ENCODE measurements at regions of chr2 and their contacts with region 1.

Region 1: DNA sequence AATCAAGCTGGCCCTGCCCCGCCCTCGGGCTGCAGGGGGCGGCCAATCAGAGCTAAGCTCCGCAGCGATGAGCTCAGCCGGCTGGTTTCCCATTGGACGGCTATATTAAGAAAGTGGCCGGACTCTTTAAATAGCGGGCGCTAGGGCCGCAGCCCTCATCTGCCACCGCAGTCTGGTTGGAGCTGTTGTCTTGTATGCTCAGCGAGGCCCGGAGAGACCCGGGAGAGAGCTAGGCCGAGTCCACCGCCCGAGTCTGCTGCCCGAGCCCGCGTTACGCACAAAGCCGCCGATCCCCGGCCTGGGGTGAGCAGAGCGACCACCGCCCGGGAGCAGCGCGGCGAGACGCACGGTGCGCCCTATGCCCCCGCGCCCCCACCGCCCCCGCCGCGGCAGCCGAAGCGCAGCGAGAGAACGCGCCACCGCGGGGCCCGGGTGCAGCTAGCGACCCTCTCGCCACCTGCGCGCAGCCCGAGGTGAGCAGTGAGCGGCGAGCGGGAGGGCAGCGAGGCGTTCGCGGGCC is at the start of gene RHOB:
- H3K4me3 ChIP-seq: peak within 1 kb of the TSS; percentile 90
- H3K27ac ChIP-seq: peak within 1 kb of the TSS; percentile 95
- H3K4me1 ChIP-seq: peaks cover 9% of the 10 kb centered on the region
- CTCF ChIP-seq: no peak

Region 2: GRCh38 chr2:20391951-20392699 is 54.9 kb before region 1 on chr2:
- CTCF ChIA-PET with region 1: interaction called, 9 read pairs
- POLR2A ChIA-PET with region 1: interaction called, 10 read pairs
- H3K4me3 ChIP-seq: no peak overlapping the region
- H3K27ac ChIP-seq: no peak overlapping the region
- H3K4me1 ChIP-seq: no peaks in the 10 kb centered on the region
- CTCF ChIP-seq: no peak

Region 3: DNA sequence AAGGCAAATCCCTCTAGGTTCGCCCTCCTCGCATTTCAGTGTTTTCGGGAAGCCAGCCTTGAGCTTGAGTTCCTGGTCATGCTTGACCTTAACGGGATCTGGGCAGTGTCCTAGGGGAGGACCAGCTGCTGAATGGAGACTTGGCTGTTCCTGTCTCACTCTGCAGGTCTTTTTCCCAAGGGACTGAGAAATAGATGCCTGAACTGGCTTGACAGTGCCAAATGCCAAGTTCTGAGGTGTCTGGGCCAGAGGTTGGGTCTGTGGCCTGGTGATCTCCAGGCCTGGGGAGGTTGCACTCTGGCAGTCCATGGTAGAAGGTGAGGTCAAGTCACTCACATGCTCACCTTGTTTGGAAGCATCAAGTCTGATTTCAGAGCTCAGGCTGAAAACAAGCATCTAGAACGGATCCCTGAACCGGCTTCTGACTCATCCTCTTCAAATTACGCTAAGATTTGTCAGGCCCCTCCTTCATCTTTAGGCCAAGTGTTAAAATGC is 19.5 kb after region 1 on chr2:
- CTCF ChIA-PET with region 1: interaction called, 3 read pairs
- POLR2A ChIA-PET with region 1: interaction called, 39 read pairs
- H3K4me3 ChIP-seq: no peak overlapping the region
- H3K27ac ChIP-seq: no peak overlapping the region
- H3K4me1 ChIP-seq: no peaks in the 10 kb centered on the region; the same call in 1 of the 2 replicates
- CTCF ChIP-seq: no peak

Region 4: DNA sequence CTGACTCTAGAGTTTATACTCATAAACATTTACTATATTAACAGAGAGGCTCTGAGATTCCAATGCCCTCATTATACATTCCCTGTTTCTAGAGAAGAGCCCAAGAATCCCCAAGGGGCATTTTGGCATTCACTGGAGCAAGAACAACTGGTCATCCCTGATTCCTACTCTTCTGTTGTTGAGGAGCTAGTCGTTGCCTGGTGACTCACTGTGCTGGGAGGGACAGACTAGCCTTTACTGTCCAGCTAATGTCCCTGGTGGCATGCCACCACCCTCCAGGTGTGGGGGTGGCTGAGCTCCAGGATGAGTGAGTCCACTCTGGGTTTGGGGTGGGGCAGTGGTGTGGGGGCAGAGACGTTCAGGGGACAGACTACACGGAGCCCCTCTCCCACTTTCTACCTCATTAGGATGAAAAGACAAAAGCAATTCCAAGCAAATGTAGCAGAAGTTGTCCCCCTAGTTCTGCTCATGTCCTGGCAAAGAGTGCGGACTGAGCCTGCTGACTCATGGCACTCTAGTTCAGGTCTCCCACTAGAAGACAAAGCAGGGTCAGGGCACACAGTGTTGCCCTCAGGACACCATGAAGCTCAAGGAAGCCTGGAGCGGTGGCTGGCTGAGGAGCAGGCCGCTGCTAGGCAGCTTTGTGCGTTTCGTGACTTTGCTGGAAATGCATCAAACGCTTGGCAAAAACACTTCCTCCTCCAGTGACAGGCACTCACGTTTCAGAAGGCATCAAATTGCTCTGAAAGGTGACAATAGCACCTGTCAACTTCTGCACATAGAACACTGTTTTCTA is 49.3 kb after region 1 on chr2:
- CTCF ChIA-PET with region 1: no interaction called
- POLR2A ChIA-PET with region 1: interaction called, 50 read pairs
- H3K4me3 ChIP-seq: no peak overlapping the region
- H3K27ac ChIP-seq: no peak overlapping the region
- H3K4me1 ChIP-seq: no peaks in the 10 kb centered on the region
- CTCF ChIP-seq: no peak

Region 5: GRCh38 chr2:20542746-20543468 is 95.9 kb after region 1 on chr2:
- CTCF ChIA-PET with region 1: interaction called, 3 read pairs
- POLR2A ChIA-PET with region 1: interaction called, 15 read pairs
- H3K4me3 ChIP-seq: no peak overlapping the region
- H3K27ac ChIP-seq: no peak overlapping the region
- H3K4me1 ChIP-seq: no peaks in the 10 kb centered on the region
- CTCF ChIP-seq: no peak

Region 6: DNA sequence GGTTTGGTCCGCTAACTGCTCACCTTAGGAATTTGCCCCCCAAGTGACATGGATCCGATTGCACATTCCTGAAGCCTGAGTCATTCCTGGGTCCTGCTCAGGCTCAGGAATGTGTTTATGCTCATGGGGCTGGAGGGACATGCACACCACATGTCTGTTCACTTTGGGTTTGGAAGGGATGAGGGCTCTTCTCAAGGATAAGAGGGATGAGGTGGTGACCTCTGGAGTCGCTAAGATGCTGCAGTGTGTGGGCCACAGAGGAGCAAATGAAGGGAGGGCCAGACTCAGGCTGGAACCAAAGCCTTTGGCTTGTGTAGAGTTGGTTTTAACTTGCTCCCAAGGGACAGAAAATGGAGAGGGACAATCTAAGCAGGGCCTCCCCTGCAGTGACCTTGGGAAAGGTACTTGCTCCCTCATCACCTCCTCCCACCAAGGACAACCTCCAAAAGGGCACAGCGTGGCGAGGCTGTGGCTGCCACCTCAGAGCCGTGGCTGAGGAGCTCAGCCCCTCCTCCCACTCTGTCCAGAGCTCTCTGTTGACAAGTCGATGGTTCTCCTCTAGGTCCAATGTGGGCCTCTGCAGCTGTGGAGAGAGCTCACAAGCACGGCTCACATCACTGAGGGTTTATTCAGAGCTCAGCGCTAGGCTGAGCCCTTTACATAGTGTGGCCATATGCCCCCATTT is 137.8 kb after region 1 on chr2:
- CTCF ChIA-PET with region 1: interaction called, 5 read pairs
- POLR2A ChIA-PET with region 1: interaction called, 100 read pairs
- H3K4me3 ChIP-seq: no peak overlapping the region
- H3K27ac ChIP-seq: no peak overlapping the region
- H3K4me1 ChIP-seq: peaks cover 8% of the 10 kb centered on the region; the same call in 1 of the 2 replicates
- CTCF ChIP-seq: no peak

Region 7: DNA sequence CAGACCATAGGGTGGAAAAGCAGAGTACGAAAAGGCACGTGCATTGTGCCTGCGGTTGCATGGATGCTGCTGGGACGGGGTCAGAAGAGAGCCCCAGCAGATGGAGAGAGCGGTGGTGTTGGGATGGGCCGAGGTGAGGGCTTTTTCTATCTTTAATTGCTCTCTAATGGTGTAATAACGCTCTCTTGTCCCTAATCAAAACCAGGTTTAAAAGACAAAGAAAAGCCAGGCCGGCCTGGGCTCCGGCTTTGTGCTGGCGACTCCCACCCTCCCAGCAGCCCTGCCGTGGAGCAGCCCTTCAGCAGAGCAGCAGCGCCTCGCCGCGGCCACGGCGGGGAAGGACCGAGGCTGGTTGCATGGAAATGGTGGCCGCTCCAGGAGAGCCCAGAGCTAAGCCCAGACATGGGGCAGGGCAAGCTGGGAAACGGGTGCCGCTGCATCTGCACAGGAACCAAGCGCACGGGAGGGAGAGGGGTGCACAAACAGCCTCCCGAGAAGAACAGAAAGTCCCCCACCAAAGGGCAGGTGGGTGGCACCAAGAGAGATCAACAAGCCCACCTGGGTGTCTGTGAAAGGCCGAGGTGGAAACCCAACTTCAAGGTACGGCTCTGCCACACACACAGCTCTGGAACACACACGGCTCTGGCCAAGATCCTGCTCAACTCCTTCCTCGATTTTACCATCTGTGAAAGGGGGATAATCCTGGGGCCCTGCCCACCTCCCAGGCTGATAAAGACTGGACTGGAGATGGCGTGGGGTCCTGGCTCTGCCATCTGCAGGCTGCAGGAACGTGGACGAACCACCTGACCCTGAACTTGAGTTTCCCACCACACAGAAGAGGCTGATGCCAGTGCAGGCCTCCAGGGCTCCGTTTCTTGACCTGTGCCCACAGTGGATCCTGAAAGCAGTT is 189.0 kb after region 1 on chr2:
- CTCF ChIA-PET with region 1: interaction called, 93 read pairs
- POLR2A ChIA-PET with region 1: interaction called, 130 read pairs
- H3K4me3 ChIP-seq: no peak overlapping the region
- H3K27ac ChIP-seq: no peak overlapping the region
- H3K4me1 ChIP-seq: 0 out of 2 replicates have a peak, but pooled peaks cover 5% of the 10 kb centered on the region
- CTCF ChIP-seq: peak; percentile 89

Region 8: GRCh38 chr2:20698916-20699613 is 252.1 kb after region 1 on chr2:
- CTCF ChIA-PET with region 1: no interaction called
- POLR2A ChIA-PET with region 1: no interaction called
- H3K4me3 ChIP-seq: no peak overlapping the region
- H3K27ac ChIP-seq: no peak overlapping the region
- H3K4me1 ChIP-seq: no peaks in the 10 kb centered on the region
- CTCF ChIP-seq: no peak

Measured in HEK293 (cell line).